HCT116 (cell line): ENCODE measurements at regions of chr1 and their contacts with region 1.

Region 1: GRCh38 chr1:153967082-153968000 is at the start of gene CREB3L4:
- DNase-seq: peak; percentile 98
- ATAC-seq: peak; percentile 75
- H3K4me3 ChIP-seq: peak within 1 kb of the TSS; percentile 68 to 79
- H3K27ac ChIP-seq: peak within 1 kb of the TSS; percentile 90
- H3K4me1 ChIP-seq: peaks cover 21 to 50% of the 10 kb centered on the region in 2 experiments
- H3K27me3 ChIP-seq: no peaks in the 10 kb centered on the region
- CTCF ChIP-seq: peak in 2 of 3 experiments; percentile 26 to 32; a peak in 3 of 6 replicates
- POLR2A ChIP-seq: peak; percentile 91
- RAD21 ChIP-seq: no peak
- total RNA-seq, gene CREB3L4: 15.3 TPM

Region 2: GRCh38 chr1:153783233-153784190 is 183.8 kb before region 1 on chr1:
- CTCF ChIA-PET with region 1: no interaction called
- POLR2A ChIA-PET with region 1: no interaction called
- RAD21 ChIA-PET with region 1: no interaction called
- intact Hi-C with region 1: loop called (anchors 5 kb)
- DNase-seq: peak; percentile 71
- ATAC-seq: peak; percentile 94
- H3K4me3 ChIP-seq: peak overlapping the region; percentile 60 to 68
- H3K27ac ChIP-seq: peak overlapping the region; percentile 69
- H3K4me1 ChIP-seq: peaks cover 6 to 14% of the 10 kb centered on the region in 2 experiments
- H3K27me3 ChIP-seq: no peaks in the 10 kb centered on the region
- CTCF ChIP-seq: 0 out of 6 replicates have a peak, but pooled peaks of 1 of the 3 experiments have one; percentile 3
- POLR2A ChIP-seq: peak; percentile 89
- RAD21 ChIP-seq: peak; percentile 5; the same call in 1 of the 2 replicates

Region 3: DNA sequence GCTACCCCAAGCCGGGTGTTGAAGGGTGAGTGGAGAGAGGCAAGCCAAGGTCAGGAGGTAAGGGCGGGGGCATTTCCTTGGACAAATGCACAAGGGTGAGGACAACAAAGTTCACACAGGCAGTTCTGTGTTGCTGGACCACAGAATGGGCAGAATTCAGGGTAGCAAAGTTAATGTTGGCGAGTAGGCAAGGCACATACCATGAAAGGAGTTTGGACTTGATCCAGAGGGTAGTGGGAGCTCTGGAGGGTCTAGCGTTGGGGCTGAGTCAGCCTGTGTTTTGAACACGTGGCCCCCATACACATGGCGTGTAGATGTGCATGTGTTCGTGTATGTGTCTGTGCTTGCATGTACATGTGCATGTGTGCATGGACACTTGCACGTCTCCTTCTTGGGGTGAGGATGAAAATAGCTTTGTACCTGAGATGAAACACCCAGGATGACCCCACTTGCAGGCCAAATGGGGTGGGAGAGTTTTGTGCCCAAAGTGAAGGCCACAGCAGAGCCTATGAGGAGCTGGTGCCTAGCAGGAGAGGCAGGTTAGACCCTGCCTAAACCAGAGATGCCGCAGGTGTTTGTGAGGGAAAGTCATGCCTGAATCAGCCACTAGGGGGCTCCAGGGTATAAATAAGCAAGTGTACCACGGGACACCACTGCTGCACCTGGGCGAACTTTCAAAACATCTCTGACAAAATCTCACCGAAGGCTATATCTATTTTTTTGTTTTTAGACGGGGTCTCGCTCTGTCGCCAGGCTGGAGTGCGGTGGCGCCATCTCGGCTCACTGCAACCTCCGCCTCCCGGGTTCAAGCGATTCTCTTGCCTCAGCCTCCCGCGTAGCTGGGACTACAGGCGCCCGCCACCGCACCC is 170.3 kb before region 1 on chr1:
- CTCF ChIA-PET with region 1: interaction called, 4 read pairs
- POLR2A ChIA-PET with region 1: interaction called, 3 read pairs
- RAD21 ChIA-PET with region 1: no interaction called
- intact Hi-C with region 1: loop called (anchors 5 kb)
- DNase-seq: peak; percentile 42
- ATAC-seq: peak; percentile 93
- H3K4me3 ChIP-seq: no peak overlapping the region
- H3K27ac ChIP-seq: no peak overlapping the region
- H3K4me1 ChIP-seq: peaks cover 0 to 2% of the 10 kb centered on the region in 2 experiments; a peak in 1 of 4 replicates
- H3K27me3 ChIP-seq: no peaks in the 10 kb centered on the region
- CTCF ChIP-seq: peak; percentile 80 to 86 (median 82)
- POLR2A ChIP-seq: no peak
- RAD21 ChIP-seq: peak; percentile 93

Region 4: GRCh38 chr1:153946622-153947241 is 20.6 kb before region 1 on chr1 and contains the start of gene DENND4B:
- CTCF ChIA-PET with region 1: interaction called, 14 read pairs
- POLR2A ChIA-PET with region 1: interaction called, 8 read pairs
- RAD21 ChIA-PET with region 1: no interaction called
- intact Hi-C with region 1: no loop called
- DNase-seq: no peak
- ATAC-seq: peak; percentile 89
- H3K4me3 ChIP-seq: peak within 1 kb of the TSS; percentile 83 to 91
- H3K27ac ChIP-seq: peak within 1 kb of the TSS; percentile 98
- H3K4me1 ChIP-seq: peaks cover 6 to 18% of the 10 kb centered on the region in 2 experiments; a peak in 3 of 4 replicates
- H3K27me3 ChIP-seq: no peaks in the 10 kb centered on the region
- CTCF ChIP-seq: peak; percentile 69 to 95 (median 81)
- POLR2A ChIP-seq: no peak
- RAD21 ChIP-seq: peak; percentile 53
- total RNA-seq, gene DENND4B: 70.8 TPM

Region 5: GRCh38 chr1:153977250-153978240 is 10.2 kb after region 1 on chr1 and contains the start of gene JTB:
- CTCF ChIA-PET with region 1: interaction called, 13 read pairs
- POLR2A ChIA-PET with region 1: interaction called, 38 read pairs
- RAD21 ChIA-PET with region 1: interaction called in 1 of 2 experiments, 3 read pairs
- intact Hi-C with region 1: no loop called
- DNase-seq: no peak
- ATAC-seq: peak; percentile 91
- H3K4me3 ChIP-seq: peak within 1 kb of the TSS; percentile 81 to 100
- H3K27ac ChIP-seq: peak within 1 kb of the TSS; percentile 91
- H3K4me1 ChIP-seq: peaks cover 0 to 14% of the 10 kb centered on the region in 2 experiments; a peak in 2 of 4 replicates
- H3K27me3 ChIP-seq: no peaks in the 10 kb centered on the region
- CTCF ChIP-seq: no peak
- POLR2A ChIP-seq: peak; percentile 48
- RAD21 ChIP-seq: no peak
- total RNA-seq, gene JTB: 123 TPM

Region 6: GRCh38 chr1:154141240-154141639 is 173.9 kb after region 1 on chr1:
- CTCF ChIA-PET with region 1: no interaction called
- POLR2A ChIA-PET with region 1: no interaction called
- RAD21 ChIA-PET with region 1: no interaction called
- intact Hi-C with region 1: no loop called
- DNase-seq: no peak
- ATAC-seq: no peak
- H3K4me3 ChIP-seq: no peak overlapping the region
- H3K27ac ChIP-seq: no peak overlapping the region
- H3K4me1 ChIP-seq: no peaks in the 10 kb centered on the region
- H3K27me3 ChIP-seq: no peaks in the 10 kb centered on the region
- CTCF ChIP-seq: no peak
- POLR2A ChIP-seq: no peak
- RAD21 ChIP-seq: no peak